ENCODE measurements at regions of chr6 and their contacts with region 1.

Region 1: GRCh38 chr6:28355743-28356665 is 6.3 kb downstream of the ZKSCAN3 start:
- DNase-seq: peak; percentile 42
- H3K4me3 ChIP-seq: peak overlapping the region; percentile 74
- CTCF ChIP-seq: peak; percentile 60

Region 2: GRCh38 chr6:27422651-27423332 is 933.2 kb before region 1 on chr6:
- CTCF ChIA-PET with region 1: no interaction called
- POLR2A ChIA-PET with region 1: no interaction called
- DNase-seq: no peak
- H3K4me3 ChIP-seq: no peak overlapping the region
- CTCF ChIP-seq: no peak

Region 3: GRCh38 chr6:28136585-28137504 is 219.2 kb before region 1 on chr6:
- CTCF ChIA-PET with region 1: interaction called, 20 read pairs
- POLR2A ChIA-PET with region 1: interaction called, 4 read pairs
- DNase-seq: peak; percentile 83
- H3K4me3 ChIP-seq: peak overlapping the region; percentile 93
- CTCF ChIP-seq: no peak

Region 4: DNA sequence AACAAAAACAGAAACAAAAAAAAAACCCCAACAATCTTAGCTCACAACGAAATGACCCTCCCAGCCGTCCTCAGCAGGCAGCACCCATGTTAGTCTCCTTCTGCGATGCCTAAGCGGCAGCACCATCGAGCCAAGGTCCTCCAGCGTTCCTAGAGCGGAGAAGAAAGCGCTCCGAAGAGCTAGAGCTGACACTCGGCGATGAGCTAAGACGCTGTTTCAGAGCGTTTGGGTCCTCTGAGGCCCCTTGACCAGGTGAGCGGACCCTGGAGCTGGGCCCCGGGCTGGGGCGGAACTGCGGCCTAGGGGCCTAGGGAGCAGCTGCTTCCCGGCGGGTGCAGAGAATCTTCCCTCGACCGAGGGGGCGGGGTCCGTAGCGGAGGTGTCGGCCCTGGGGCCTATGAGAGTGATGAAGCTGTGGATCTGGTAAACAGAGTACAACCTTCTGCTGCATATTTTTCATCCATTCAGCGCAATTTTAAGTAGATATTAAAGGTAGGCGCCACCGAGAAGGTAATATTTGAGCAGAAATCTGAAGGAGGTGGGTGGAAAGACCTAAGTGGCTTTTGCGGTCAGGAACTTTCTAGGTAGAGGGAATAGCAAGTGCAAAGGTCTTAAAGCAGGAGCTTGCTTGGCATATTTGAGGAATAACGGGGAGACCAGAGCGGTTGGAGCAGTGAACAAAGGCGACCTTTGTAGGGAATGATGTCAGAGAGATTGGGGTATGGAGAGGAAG is 88.9 kb before region 1 on chr6 and contains the start of gene ZSCAN26:
- CTCF ChIA-PET with region 1: interaction called, 11 read pairs
- POLR2A ChIA-PET with region 1: interaction called, 4 read pairs
- DNase-seq: peak; percentile 46
- H3K4me3 ChIP-seq: peak within 1 kb of the TSS; percentile 73
- CTCF ChIP-seq: no peak

Region 5: GRCh38 chr6:28371706-28372451 is 15.9 kb after region 1 on chr6:
- CTCF ChIA-PET with region 1: interaction called, 16 read pairs
- POLR2A ChIA-PET with region 1: no interaction called
- DNase-seq: no peak
- H3K4me3 ChIP-seq: no peak overlapping the region
- CTCF ChIP-seq: no peak

Region 6: DNA sequence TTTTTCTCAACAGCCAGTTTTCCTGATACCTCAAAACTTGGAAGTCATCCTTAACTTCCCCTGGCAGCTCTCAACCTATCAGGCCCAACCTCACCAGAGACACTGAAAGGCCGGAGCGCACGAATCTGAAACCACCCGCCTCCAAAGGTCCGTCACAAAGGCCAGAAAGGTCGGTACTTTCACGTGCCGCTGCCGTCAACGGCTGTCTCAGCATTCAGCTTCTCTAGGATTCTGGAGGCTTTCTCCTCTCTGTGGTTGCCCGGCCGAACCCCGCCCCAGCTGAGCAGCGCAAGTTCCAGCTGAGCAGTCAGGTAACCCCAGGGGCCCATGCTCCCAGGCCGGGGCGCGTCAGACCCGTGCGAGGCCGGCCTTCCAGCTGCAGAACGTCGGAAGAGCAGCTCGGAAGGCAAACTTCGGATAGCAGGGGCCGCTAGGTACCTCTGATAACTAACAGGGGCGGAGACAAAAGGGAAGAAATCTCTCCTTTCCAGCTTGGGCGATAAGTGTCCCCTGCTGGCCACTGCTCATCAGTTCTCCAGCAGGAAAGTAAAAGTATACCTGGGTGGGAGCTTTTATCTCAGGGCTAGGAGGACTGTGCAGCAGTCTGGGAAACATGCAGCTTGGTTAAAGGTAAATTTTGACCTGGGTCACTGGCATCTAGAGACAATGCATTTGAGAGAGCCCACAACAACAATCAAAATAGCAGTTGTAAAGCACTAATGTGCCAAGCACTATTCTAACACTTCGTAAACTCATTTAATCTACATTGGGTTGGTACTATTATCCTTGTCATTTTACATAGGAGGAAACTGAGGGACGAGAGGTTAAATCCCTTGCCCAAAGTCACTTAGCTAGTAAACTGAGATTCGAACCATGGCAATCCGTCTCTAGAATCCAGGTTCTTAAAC is 27.5 kb after region 1 on chr6:
- CTCF ChIA-PET with region 1: interaction called, 29 read pairs
- POLR2A ChIA-PET with region 1: no interaction called
- DNase-seq: no peak
- H3K4me3 ChIP-seq: peak overlapping the region; percentile 50
- CTCF ChIP-seq: peak; percentile 21